CD4-positive, alpha-beta memory T cell (primary cell): ENCODE measurements at regions of chr6 and their contacts with region 1.

Region 1: GRCh38 chr6:33391278-33391921 is at the start of gene KIFC1:
- DNase-seq: peak; percentile 99
- H3K4me3 ChIP-seq: peak within 1 kb of the TSS; percentile 18 to 78
- H3K4me3 Mint-ChIP-seq: peak within 1 kb of the TSS; percentile 83 to 94 (median 86)
- H3K27ac ChIP-seq: peak within 1 kb of the TSS; percentile 74
- H3K27ac Mint-ChIP-seq: peak within 1 kb of the TSS; percentile 89 to 99 (median 98)
- H3K4me1 ChIP-seq: peaks cover 21% of the 10 kb centered on the region
- H3K4me1 Mint-ChIP-seq: peaks cover 25 to 40% (median 30%) of the 10 kb centered on the region in 4 donors
- H3K27me3 ChIP-seq: no peaks in the 10 kb centered on the region
- H3K27me3 Mint-ChIP-seq: no peaks in the 10 kb centered on the region
- total RNA-seq, gene KIFC1: 0.61 to 0.69 TPM

Region 2: DNA sequence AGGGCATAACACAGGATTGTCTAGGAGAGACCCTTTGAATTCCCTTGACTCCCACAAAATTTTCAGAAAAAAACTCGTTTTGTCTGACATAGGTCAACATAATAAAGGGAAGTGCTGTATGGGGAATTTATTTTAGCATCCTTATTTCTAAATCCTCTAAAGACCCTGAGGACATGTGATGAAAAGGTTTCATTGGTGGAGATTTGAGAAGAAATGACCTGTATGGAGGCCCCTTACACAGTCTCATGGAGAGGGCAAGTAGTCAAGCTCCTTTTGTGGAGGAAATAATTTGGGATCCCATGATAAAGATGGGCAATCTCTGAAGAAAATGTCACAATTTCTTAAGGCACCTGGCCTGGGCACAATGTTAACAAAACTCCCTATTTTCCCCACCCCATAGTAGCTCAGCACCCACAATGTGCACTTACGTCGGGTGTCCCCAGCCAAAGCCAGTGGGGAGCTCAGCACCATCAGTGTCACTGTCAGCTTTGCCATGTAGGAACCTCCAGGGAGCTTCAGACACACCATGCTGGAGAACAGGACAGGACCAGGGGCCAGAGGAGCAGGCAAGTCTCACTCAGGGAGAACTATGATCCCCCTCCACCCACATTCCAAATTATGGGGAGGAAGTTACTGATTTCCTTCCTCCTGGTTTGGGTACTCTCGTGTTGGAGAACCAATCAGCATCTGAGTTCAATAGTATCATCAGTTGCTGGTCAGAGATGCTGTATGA is 861.5 kb before region 1 on chr6 and contains the start of gene HLA-DRB5:
- CTCF ChIA-PET with region 1: no interaction called
- POLR2A ChIA-PET with region 1: no interaction called
- intact Hi-C with region 1: no loop called
- DNase-seq: peak in 2 of 5 donors; percentile 11 to 34
- H3K4me3 ChIP-seq: peak within 1 kb of the TSS in 1 of 2 donors; percentile 43
- H3K4me3 Mint-ChIP-seq: peak within 1 kb of the TSS; percentile 40 to 78 (median 54)
- H3K27ac ChIP-seq: peak within 1 kb of the TSS; percentile 21
- H3K27ac Mint-ChIP-seq: peak within 1 kb of the TSS in 5 of 7 donors; percentile 15 to 73 (median 36)
- H3K4me1 ChIP-seq: no peaks in the 10 kb centered on the region
- H3K4me1 Mint-ChIP-seq: peaks cover 0 to 10% (median under 1%) of the 10 kb centered on the region in 4 donors
- H3K27me3 ChIP-seq: no peaks in the 10 kb centered on the region
- H3K27me3 Mint-ChIP-seq: peaks cover 0 to 1% of the 10 kb centered on the region in 2 donors
- total RNA-seq, gene HLA-DRB5: 0.86 to 1.9 TPM

Region 3: DNA sequence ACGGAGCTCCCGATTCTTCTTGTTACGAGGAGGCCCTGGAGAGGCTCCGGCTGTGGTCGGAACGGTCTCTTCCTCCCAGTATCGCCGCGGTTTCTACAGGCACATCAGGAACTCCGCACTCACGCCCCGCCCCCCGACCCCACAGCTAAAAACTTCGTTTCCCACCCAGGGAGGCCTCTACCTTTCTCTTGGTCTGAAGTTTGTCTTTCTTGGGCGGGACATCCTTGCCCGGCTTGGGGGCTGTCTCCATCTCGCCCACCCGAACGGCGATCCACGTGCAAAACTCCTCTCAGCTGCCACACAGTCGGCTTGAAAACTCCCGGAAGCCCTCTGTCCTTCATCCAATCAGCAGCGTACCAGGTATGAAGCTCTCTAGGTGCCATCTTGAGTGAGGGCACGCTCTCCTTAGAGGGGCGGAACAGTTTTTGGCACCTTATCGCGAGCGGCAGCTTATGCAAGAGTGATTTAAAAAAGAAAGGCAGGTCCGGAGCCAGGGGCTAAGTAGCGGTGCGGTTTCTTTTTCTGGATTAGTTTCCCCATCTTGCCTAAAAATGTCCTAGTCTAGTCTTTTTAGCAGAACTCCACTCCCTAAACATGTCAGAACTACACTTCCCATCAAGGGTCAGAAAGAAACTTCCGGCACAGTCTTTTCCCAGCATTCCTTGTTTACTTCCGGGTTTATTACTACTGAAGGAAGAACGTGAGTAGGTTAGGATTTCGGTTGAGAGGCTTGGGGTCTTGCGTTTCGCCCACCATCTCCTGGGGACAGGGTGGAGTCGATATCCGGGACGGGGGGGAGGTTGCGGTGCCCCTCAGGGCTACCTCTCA is 102.3 kb before region 1 on chr6 and contains the starts of genes PFDN6 and WDR46:
- CTCF ChIA-PET with region 1: interaction called, 5 read pairs
- POLR2A ChIA-PET with region 1: interaction called, 9 read pairs
- intact Hi-C with region 1: loop called (anchors 1 kb)
- DNase-seq: peak; percentile 87 to 92 (median 89)
- H3K4me3 ChIP-seq: peak within 1 kb of the TSS; percentile 73 to 84
- H3K4me3 Mint-ChIP-seq: peak within 1 kb of the TSS; percentile 96 to 100 (median 98)
- H3K27ac ChIP-seq: peak within 1 kb of the TSS; percentile 71
- H3K27ac Mint-ChIP-seq: peak within 1 kb of the TSS; percentile 79 to 98 (median 95)
- H3K4me1 ChIP-seq: peaks cover 30% of the 10 kb centered on the region
- H3K4me1 Mint-ChIP-seq: peaks cover 24 to 48% (median 36%) of the 10 kb centered on the region in 4 donors
- H3K27me3 ChIP-seq: no peaks in the 10 kb centered on the region
- H3K27me3 Mint-ChIP-seq: no peaks in the 10 kb centered on the region
- total RNA-seq, gene PFDN6: 43.6 to 45.5 TPM
- total RNA-seq, gene WDR46: 60.8 to 66.1 TPM

Region 4: GRCh38 chr6:33323623-33323948 is 67.8 kb before region 1 on chr6:
- CTCF ChIA-PET with region 1: interaction called, 10 read pairs
- POLR2A ChIA-PET with region 1: interaction called, 3 read pairs
- intact Hi-C with region 1: loop called (anchors 1 kb)
- DNase-seq: no peak
- H3K4me3 ChIP-seq: peak overlapping the region; percentile 53 to 68
- H3K4me3 Mint-ChIP-seq: peak overlapping the region; percentile 94 to 100 (median 98)
- H3K27ac ChIP-seq: peak overlapping the region; percentile 88
- H3K27ac Mint-ChIP-seq: peak overlapping the region; percentile 89 to 100 (median 96)
- H3K4me1 ChIP-seq: peaks cover 47% of the 10 kb centered on the region
- H3K4me1 Mint-ChIP-seq: peaks cover 32 to 59% (median 46%) of the 10 kb centered on the region in 4 donors
- H3K27me3 ChIP-seq: no peaks in the 10 kb centered on the region
- H3K27me3 Mint-ChIP-seq: no peaks in the 10 kb centered on the region

Region 5: DNA sequence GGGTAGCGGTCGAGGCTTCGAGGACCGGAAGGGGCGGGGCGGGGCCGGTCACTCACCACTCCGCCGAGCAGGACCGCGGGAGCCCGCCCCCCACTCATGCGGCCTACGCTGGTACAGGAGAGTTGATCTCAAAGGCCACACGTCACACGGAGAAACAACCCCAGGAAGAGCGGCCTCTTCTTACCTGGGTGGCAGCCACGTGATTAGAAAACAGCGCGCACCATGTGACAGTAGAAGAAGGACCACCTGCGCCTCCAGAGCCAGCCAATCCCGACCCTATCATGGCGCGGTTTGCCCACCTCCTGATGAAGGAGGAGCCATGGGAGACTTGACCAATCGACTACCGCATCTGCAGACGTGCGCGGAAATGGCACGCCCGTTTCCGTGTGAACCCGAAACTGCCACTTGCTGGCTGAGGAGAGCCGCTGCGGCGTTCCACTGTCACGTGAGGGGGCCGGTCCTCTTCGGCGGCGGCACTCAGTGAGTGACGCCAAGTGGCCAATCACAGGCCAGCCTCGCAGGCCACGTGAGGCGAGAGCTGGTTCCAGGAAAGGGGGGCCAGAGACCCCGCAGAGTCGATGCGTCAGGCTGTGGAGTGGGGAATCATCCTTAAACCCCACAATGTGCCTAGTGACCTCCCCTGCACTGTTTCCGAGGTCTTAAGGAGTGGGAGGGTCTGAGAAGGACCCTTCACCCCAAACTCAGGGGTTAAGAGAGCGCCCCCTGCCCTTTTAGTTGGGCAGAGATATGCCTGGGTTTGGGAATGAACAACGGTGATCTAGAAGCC is 26.7 kb after region 1 on chr6 and contains the start of gene CUTA:
- CTCF ChIA-PET with region 1: interaction called, 17 read pairs
- POLR2A ChIA-PET with region 1: interaction called, 16 read pairs
- intact Hi-C with region 1: loop called (anchors 1 kb)
- DNase-seq: peak; percentile 97 to 100 (median 100)
- H3K4me3 ChIP-seq: peak within 1 kb of the TSS; percentile 82 to 94
- H3K4me3 Mint-ChIP-seq: peak within 1 kb of the TSS; percentile 87 to 97 (median 94)
- H3K27ac ChIP-seq: peak within 1 kb of the TSS; percentile 97
- H3K27ac Mint-ChIP-seq: peak within 1 kb of the TSS; percentile 99 to 100 (median 99)
- H3K4me1 ChIP-seq: peaks cover 72% of the 10 kb centered on the region
- H3K4me1 Mint-ChIP-seq: peaks cover 43 to 87% (median 61%) of the 10 kb centered on the region in 4 donors
- H3K27me3 ChIP-seq: no peaks in the 10 kb centered on the region
- H3K27me3 Mint-ChIP-seq: no peaks in the 10 kb centered on the region
- total RNA-seq, gene CUTA: 210 to 217 TPM

Region 6: GRCh38 chr6:33454009-33454946 is 62.9 kb after region 1 on chr6 and contains the start of gene ZBTB9:
- CTCF ChIA-PET with region 1: interaction called, 12 read pairs
- POLR2A ChIA-PET with region 1: interaction called, 18 read pairs
- intact Hi-C with region 1: loop called (anchors 1 kb)
- DNase-seq: peak; percentile 92 to 96 (median 92)
- H3K4me3 ChIP-seq: peak within 1 kb of the TSS; percentile 84 to 89
- H3K4me3 Mint-ChIP-seq: peak within 1 kb of the TSS; percentile 93 to 99 (median 97)
- H3K27ac ChIP-seq: peak within 1 kb of the TSS; percentile 78
- H3K27ac Mint-ChIP-seq: peak within 1 kb of the TSS; percentile 82 to 98 (median 95)
- H3K4me1 ChIP-seq: peaks cover 29% of the 10 kb centered on the region
- H3K4me1 Mint-ChIP-seq: peaks cover 14 to 43% (median 29%) of the 10 kb centered on the region in 4 donors
- H3K27me3 ChIP-seq: no peaks in the 10 kb centered on the region
- H3K27me3 Mint-ChIP-seq: no peaks in the 10 kb centered on the region
- total RNA-seq, gene ZBTB9: 12.1 to 12.8 TPM

Region 7: DNA sequence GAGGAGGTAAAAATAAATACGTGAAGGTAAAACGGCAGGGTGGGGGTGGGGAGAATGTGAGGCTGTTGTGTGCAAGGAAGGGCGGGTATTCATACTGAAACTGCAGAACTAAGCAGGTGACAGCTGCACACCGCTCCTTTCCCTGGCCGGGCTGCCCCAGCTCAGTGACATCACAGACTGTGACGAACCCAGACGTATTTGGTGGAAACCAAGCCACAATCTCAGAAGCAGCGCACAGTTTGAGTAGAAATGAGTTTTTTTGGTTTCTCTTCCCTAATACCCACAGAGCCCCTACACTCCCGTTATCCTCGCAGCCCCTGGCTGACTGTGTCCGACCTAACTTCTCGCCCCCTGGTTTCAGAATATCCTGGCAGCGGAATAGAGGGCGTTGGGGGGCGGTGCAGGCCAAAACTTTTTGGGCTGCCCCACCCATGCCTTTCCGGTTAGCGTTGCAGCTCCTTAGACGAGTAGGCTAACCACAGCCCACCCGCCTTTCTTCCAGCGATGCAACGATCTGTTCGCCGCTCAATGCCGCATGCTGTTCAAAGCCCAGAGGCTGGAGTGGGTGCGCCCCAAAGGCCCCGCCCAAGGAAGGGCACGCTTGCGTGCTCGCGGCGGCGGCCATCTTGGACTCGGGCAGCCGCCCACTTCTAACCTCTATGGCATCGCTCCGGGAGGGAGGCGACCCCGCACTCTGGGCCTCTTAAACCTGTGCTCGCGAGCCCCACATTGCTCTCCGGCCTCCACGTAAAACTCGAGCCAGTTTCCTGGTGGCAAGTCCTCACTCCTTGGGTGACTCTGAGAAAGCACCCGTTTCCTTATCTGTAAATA is 179.6 kb after region 1 on chr6:
- CTCF ChIA-PET with region 1: interaction called, 4 read pairs
- POLR2A ChIA-PET with region 1: interaction called, 6 read pairs
- intact Hi-C with region 1: loop called (anchors 1 kb)
- DNase-seq: peak; percentile 92 to 98 (median 95)
- H3K4me3 ChIP-seq: peak overlapping the region; percentile 13 to 72
- H3K4me3 Mint-ChIP-seq: peak overlapping the region; percentile 90 to 97 (median 94)
- H3K27ac ChIP-seq: peak overlapping the region; percentile 93
- H3K27ac Mint-ChIP-seq: peak overlapping the region; percentile 99 to 100 (median 100)
- H3K4me1 ChIP-seq: peaks cover 23% of the 10 kb centered on the region
- H3K4me1 Mint-ChIP-seq: peaks cover 12 to 44% (median 31%) of the 10 kb centered on the region in 4 donors
- H3K27me3 ChIP-seq: no peaks in the 10 kb centered on the region
- H3K27me3 Mint-ChIP-seq: no peaks in the 10 kb centered on the region

Region 8: GRCh38 chr6:33732826-33733708 is 341.7 kb after region 1 on chr6:
- CTCF ChIA-PET with region 1: no interaction called
- POLR2A ChIA-PET with region 1: no interaction called
- intact Hi-C with region 1: no loop called
- DNase-seq: no peak
- H3K4me3 ChIP-seq: no peak overlapping the region
- H3K4me3 Mint-ChIP-seq: no peak overlapping the region
- H3K27ac ChIP-seq: no peak overlapping the region
- H3K27ac Mint-ChIP-seq: peak overlapping the region in 1 of 7 donors; percentile 7
- H3K4me1 ChIP-seq: no peaks in the 10 kb centered on the region
- H3K4me1 Mint-ChIP-seq: peaks cover 0 to 6% (median 0%) of the 10 kb centered on the region in 4 donors
- H3K27me3 ChIP-seq: no peaks in the 10 kb centered on the region
- H3K27me3 Mint-ChIP-seq: peaks cover 0 to 2% of the 10 kb centered on the region in 2 donors